IMR-90 (cell line): ENCODE measurements at regions of chr13 and their contacts with region 1.

Region 1: DNA sequence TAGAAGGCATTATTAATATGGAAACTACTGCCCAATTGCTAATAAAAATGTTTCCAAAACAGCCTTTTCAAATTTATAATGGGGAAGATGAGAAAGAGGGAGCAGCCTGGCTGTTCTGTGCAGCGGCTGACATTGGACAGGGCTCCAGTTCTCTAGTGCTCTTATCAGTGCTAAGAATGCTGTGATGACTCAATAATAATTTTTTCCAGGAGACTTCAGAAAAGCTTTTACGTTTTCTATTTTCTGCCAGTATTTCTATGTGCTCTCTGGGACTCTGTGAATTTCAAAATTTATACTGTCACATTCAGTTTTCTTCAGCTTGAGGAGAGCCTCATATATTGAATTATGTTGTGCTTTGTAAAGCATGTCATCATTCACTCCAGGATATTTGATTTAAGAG is 209.6 kb downstream of the VWA8 start:
- DNase-seq: peak; percentile 63
- ATAC-seq: peak; percentile 92
- H3K4me3 ChIP-seq: no peak overlapping the region
- H3K27ac ChIP-seq: no peak overlapping the region
- H3K4me1 ChIP-seq: peaks cover 1% of the 10 kb centered on the region; the same call in 1 of the 2 replicates
- H3K27me3 ChIP-seq: no peaks in the 10 kb centered on the region
- CTCF ChIP-seq: no peak
- POLR2A ChIP-seq: no peak
- RAD21 ChIP-seq: no peak

Region 2: GRCh38 chr13:41708713-41709112 is 42.6 kb before region 1 on chr13:
- CTCF ChIA-PET with region 1: no interaction called
- POLR2A ChIA-PET with region 1: no interaction called
- dilution Hi-C with region 1: no loop called
- in situ Hi-C with region 1: no loop called
- intact Hi-C with region 1: loop called (anchors 5 kb)
- DNase-seq: no peak
- ATAC-seq: no peak
- H3K4me3 ChIP-seq: no peak overlapping the region
- H3K27ac ChIP-seq: no peak overlapping the region
- H3K4me1 ChIP-seq: no peaks in the 10 kb centered on the region
- H3K27me3 ChIP-seq: no peaks in the 10 kb centered on the region
- CTCF ChIP-seq: no peak
- POLR2A ChIP-seq: no peak
- RAD21 ChIP-seq: no peak